GM23248 (cell line): ENCODE measurements at regions of chr11 and their contacts with region 1.

Region 1: DNA sequence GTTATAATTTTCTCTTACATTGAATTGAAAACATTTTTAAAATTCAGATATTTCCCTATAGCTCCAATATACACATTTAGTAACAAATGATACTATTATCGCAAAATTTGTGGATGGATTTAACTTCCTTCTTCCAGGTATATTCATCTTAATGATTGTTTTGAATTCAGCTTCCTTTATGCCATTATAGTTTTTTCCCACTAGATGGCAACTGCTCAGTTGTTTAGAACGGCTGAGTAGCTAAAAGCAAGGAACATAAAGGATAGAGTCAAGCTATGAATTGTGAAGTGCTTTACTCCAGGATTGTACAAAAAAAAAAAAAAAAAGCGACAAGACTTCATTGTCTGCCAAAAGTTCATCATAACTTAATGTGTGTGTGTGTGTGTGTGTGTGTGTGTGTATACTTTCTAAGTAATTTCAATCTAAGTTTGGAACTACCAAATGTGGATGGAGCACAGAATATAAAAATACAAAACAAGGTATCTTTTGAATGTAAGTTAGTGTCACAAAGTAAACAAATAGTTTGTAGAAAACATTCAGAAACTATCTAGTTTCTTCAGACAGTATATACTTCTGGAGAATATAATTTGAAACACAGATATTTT is 846.4 kb downstream of the DLG2 start:
- DNase-seq: peak; percentile 60
- H3K4me3 ChIP-seq: no peak overlapping the region
- H3K27ac ChIP-seq: no peak overlapping the region
- H3K4me1 ChIP-seq: no peaks in the 10 kb centered on the region
- H3K27me3 ChIP-seq: no peaks in the 10 kb centered on the region

Region 2: GRCh38 chr11:84853841-84854465 is 73.2 kb after region 1 on chr11:
- in situ Hi-C with region 1: no loop called
- DNase-seq: no peak
- H3K4me3 ChIP-seq: no peak overlapping the region
- H3K27ac ChIP-seq: no peak overlapping the region
- H3K4me1 ChIP-seq: peaks cover 44% of the 10 kb centered on the region
- H3K27me3 ChIP-seq: no peaks in the 10 kb centered on the region

Region 3: DNA sequence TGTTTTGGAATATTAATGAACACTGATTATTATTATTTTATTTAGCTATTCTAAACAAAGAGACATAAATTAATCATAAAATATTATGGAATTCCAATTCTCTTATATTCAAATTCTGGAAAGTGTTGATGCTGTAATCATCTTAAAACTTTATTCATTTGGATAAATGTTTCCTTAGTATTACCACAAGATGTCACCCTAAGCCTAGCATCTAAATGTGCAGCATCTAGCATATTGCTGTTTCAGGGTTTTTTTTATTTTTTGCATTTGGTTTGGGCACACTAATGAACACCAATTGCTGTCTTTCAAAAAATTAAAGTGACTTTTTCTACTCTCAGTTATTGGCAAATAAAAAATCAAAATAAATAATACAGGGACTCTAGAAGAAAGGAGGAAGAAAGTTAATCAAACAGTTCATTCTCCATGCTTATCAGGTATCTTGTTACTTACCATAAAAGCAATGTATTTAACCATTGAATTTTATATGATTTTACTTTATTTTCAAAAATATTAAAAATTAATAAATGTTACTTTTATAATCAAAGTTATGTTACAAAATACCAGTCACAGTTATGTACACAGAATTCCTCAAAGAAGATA is 814.6 kb after region 1 on chr11:
- in situ Hi-C with region 1: loop called (anchors 25 kb)
- DNase-seq: peak; percentile 73
- H3K4me3 ChIP-seq: no peak overlapping the region
- H3K27ac ChIP-seq: no peak overlapping the region
- H3K4me1 ChIP-seq: no peaks in the 10 kb centered on the region
- H3K27me3 ChIP-seq: no peaks in the 10 kb centered on the region